AG04450 (cell line): ENCODE measurements at regions of chr2 and their contacts with region 1.

Region 1: DNA sequence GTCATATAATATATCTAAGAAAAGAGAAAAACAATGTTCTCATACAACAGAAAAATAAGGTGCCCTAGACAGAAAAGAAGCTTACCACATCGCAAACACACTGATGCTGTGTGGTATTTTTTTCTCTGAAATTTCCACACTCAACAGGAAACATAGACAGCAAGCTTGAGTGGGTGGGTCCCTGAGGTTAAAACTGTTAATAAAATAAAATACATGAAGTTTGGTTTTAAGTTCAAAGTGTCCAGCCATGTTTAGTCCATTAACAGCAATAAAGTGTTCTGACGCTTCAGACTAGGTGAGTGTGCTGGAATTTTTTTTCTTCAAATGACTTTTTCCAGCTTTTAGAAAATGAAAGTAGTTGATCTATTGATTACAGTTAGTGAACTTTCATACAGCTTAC is 83.3 kb upstream of the EPB41L5 start:
- DNase-seq: no peak
- H3K4me3 ChIP-seq: no peak overlapping the region
- H3K27ac ChIP-seq: no peak overlapping the region
- H3K27me3 ChIP-seq: no peaks in the 10 kb centered on the region
- CTCF ChIP-seq: no peak

Region 2: GRCh38 chr2:119841550-119841949 is 88.0 kb before region 1 on chr2:
- CTCF ChIA-PET with region 1: no interaction called
- POLR2A ChIA-PET with region 1: interaction called, 12 read pairs
- DNase-seq: no peak
- H3K4me3 ChIP-seq: no peak overlapping the region
- H3K27ac ChIP-seq: no peak overlapping the region
- H3K27me3 ChIP-seq: no peaks in the 10 kb centered on the region
- CTCF ChIP-seq: no peak

Region 3: GRCh38 chr2:119943058-119943457 is 13.5 kb after region 1 on chr2:
- CTCF ChIA-PET with region 1: no interaction called
- POLR2A ChIA-PET with region 1: no interaction called
- DNase-seq: no peak
- H3K4me3 ChIP-seq: no peak overlapping the region
- H3K27ac ChIP-seq: no peak overlapping the region
- H3K27me3 ChIP-seq: no peaks in the 10 kb centered on the region
- CTCF ChIP-seq: no peak